ENCODE measurements at regions of chr1 and their contacts with region 1.

Region 1: GRCh38 chr1:17661546-17662157 is 93.5 kb upstream of the ACTL8 start:
- DNase-seq: peak; percentile 55 to 84 (median 79)
- ATAC-seq: peak; percentile 6 to 27
- H3K4me3 ChIP-seq: no peak overlapping the region
- H3K27ac ChIP-seq: no peak overlapping the region
- H3K4me1 ChIP-seq: no peaks in the 10 kb centered on the region
- H3K27me3 ChIP-seq: no peaks in the 10 kb centered on the region

Region 2: GRCh38 chr1:17624611-17625233 is 36.9 kb before region 1 on chr1:
- intact Hi-C with region 1: no loop called
- DNase-seq: peak; percentile 74 to 86 (median 86)
- ATAC-seq: peak; percentile 61 to 70
- H3K4me3 ChIP-seq: no peak overlapping the region
- H3K27ac ChIP-seq: peak overlapping the region; percentile 85
- H3K4me1 ChIP-seq: peaks cover 10% of the 10 kb centered on the region
- H3K27me3 ChIP-seq: no peaks in the 10 kb centered on the region

Region 3: GRCh38 chr1:17826165-17826488 is 164.5 kb after region 1 on chr1:
- intact Hi-C with region 1: loop called in 3 of 4 experiments (anchors 10 kb)
- DNase-seq: peak; percentile 60 to 82 (median 75)
- ATAC-seq: peak in 1 of 2 donors; percentile 32
- H3K4me3 ChIP-seq: no peak overlapping the region
- H3K27ac ChIP-seq: no peak overlapping the region
- H3K4me1 ChIP-seq: peaks cover 4% of the 10 kb centered on the region
- H3K27me3 ChIP-seq: no peaks in the 10 kb centered on the region

Region 4: DNA sequence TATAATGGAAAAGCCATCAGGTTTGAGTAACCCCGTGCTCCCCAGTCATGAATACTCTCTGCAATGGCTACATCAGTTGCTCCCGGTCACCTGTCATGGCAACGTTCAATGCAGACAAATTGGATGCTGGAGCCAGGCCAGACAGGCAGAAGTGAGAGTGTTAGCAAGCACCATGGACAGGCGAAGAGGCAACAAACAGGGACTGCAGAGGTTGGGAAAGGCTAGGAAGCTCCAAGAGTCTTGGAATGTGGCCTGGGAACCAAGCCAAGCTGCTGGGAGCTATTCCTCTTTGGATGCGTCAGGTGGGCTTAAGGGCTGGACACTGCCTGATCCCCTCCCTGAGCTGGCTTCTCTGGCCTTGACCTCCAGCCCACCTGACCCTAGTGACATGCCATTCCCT is 196.3 kb after region 1 on chr1:
- intact Hi-C with region 1: no loop called
- DNase-seq: no peak
- ATAC-seq: no peak
- H3K4me3 ChIP-seq: no peak overlapping the region
- H3K27ac ChIP-seq: no peak overlapping the region
- H3K4me1 ChIP-seq: no peaks in the 10 kb centered on the region
- H3K27me3 ChIP-seq: no peaks in the 10 kb centered on the region

Region 5: DNA sequence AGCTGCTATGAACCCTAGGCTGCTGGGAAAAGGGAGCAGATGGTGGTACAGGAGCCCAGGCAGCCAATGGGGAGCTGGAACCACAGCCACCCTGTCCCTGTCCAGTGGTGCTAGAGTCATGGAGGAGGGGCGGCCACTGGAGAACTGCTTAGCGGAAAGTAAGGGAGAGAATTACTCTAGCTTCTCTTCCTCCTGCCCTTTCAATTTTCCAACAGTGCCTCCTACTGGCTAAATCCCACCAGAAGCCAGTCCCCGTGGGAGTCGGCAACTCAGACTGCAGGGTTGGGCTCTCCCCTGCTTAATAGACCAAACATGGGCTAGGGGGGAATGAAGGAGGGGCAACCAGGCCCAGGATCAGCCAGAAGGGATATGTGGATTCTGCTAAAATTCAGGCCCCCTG is 248.0 kb after region 1 on chr1:
- intact Hi-C with region 1: loop called in 1 of 4 experiments (anchors 10 kb)
- DNase-seq: no peak
- ATAC-seq: peak in 1 of 2 donors; percentile 48
- H3K4me3 ChIP-seq: no peak overlapping the region
- H3K27ac ChIP-seq: no peak overlapping the region
- H3K4me1 ChIP-seq: no peaks in the 10 kb centered on the region
- H3K27me3 ChIP-seq: no peaks in the 10 kb centered on the region